ENCODE measurements at regions of chr20 and their contacts with region 1.

Region 1: GRCh38 chr20:44196271-44196670 is 9.3 kb upstream of the JPH2 start:
- DNase-seq: no peak

Region 2: GRCh38 chr20:43749734-43750294 is 446.5 kb before region 1 on chr20:
- intact Hi-C with region 1: loop called (anchors 10 kb)
- DNase-seq: peak; percentile 48 to 96 (median 88)